B cell (primary cell): ENCODE measurements at regions of chr19 and their contacts with region 1.

Region 1: GRCh38 chr19:10332955-10333757 is at the start of gene RAVER1:
- DNase-seq: peak; percentile 99
- ATAC-seq: peak; percentile 97
- H3K4me3 ChIP-seq: peak within 1 kb of the TSS; percentile 63 to 94 (median 83)
- H3K4me3 Mint-ChIP-seq: peak within 1 kb of the TSS; percentile 97
- H3K27ac ChIP-seq: peak within 1 kb of the TSS; percentile 90 to 91
- H3K27ac Mint-ChIP-seq: peak within 1 kb of the TSS; percentile 97
- H3K4me1 ChIP-seq: peaks cover 14 to 24% of the 10 kb centered on the region in 2 donors
- H3K4me1 Mint-ChIP-seq: peaks cover 21% of the 10 kb centered on the region
- H3K27me3 ChIP-seq: no peaks in the 10 kb centered on the region
- H3K27me3 Mint-ChIP-seq: no peaks in the 10 kb centered on the region
- CTCF ChIP-seq: no peak
- total RNA-seq, gene RAVER1: 54.6 and 62.7 TPM in 2 replicates

Region 2: GRCh38 chr19:10230861-10231611 is 102.1 kb before region 1 on chr19 and contains the start of gene S1PR2:
- CTCF ChIA-PET with region 1: interaction called, 3 read pairs
- POLR2A ChIA-PET with region 1: interaction called, 13 read pairs
- intact Hi-C with region 1: no loop called
- DNase-seq: peak; percentile 93
- ATAC-seq: peak; percentile 29
- H3K4me3 ChIP-seq: peak within 1 kb of the TSS; percentile 11 to 97 (median 66)
- H3K4me3 Mint-ChIP-seq: peak within 1 kb of the TSS; percentile 83
- H3K27ac ChIP-seq: peak within 1 kb of the TSS in 1 of 2 donors; percentile 81
- H3K27ac Mint-ChIP-seq: peak within 1 kb of the TSS; percentile 73
- H3K4me1 ChIP-seq: peaks cover 28 to 57% of the 10 kb centered on the region in 2 donors
- H3K4me1 Mint-ChIP-seq: peaks cover 45% of the 10 kb centered on the region
- H3K27me3 ChIP-seq: no peaks in the 10 kb centered on the region
- H3K27me3 Mint-ChIP-seq: no peaks in the 10 kb centered on the region
- CTCF ChIP-seq: no peak
- total RNA-seq, gene S1PR2: 3.6 and 4.4 TPM in 2 replicates

Region 3: GRCh38 chr19:10315335-10316214 is 17.6 kb before region 1 on chr19 and contains the start of gene FDX2:
- CTCF ChIA-PET with region 1: no interaction called
- POLR2A ChIA-PET with region 1: interaction called, 8 read pairs
- intact Hi-C with region 1: loop called (anchors 1 kb)
- DNase-seq: peak; percentile 92
- ATAC-seq: peak; percentile 91
- H3K4me3 ChIP-seq: peak within 1 kb of the TSS; percentile 31 to 91 (median 80)
- H3K4me3 Mint-ChIP-seq: peak within 1 kb of the TSS; percentile 96
- H3K27ac ChIP-seq: peak within 1 kb of the TSS in 1 of 2 donors; percentile 55
- H3K27ac Mint-ChIP-seq: peak within 1 kb of the TSS; percentile 85
- H3K4me1 ChIP-seq: peaks cover 6 to 14% of the 10 kb centered on the region in 2 donors
- H3K4me1 Mint-ChIP-seq: peaks cover 14% of the 10 kb centered on the region
- H3K27me3 ChIP-seq: no peaks in the 10 kb centered on the region
- H3K27me3 Mint-ChIP-seq: no peaks in the 10 kb centered on the region
- CTCF ChIP-seq: no peak
- total RNA-seq, gene FDX2: 13.6 and 13.9 TPM in 2 replicates

Region 4: DNA sequence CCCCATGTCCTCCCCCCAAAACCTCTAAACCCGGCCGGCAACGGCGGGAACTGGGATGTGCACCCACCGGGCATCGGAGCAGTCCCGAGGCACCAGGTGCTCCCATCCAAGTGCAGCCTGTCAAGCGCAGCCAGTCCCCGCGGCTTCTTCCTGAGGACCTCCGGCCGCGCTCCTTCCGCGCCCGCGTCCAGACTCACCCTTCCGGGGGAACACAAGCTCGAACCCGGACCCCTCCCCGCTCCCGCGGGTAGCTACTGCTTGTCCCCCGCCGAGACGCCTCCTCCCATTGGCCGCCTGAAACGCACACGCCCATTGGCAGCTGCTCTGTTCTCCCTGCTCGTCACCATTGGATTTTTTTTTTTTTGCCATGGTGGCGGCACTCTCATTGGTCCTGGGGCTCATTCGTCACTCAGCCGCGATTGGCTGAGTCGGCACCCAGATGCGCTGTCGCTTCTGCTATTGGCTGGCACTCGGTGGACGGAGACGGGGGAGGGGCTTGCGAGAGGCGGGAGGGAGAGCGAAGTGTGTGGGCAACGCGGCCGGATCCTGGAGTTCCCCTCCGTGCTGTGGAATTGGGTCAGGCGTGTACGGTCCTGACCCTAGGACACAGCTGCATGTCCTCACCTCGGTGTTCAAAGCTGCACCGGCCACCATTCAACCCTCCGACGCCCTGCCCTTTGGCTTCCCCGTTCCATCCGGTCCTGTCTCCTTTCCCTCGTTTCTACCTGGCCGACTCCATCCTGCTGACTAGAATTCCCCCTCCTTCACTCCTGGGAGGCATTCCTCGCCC is 47.4 kb after region 1 on chr19 and contains the start of gene TYK2:
- CTCF ChIA-PET with region 1: interaction called, 3 read pairs
- POLR2A ChIA-PET with region 1: interaction called, 9 read pairs
- intact Hi-C with region 1: loop called (anchors 1 kb)
- DNase-seq: peak; percentile 99
- ATAC-seq: peak; percentile 91
- H3K4me3 ChIP-seq: peak within 1 kb of the TSS; percentile 63 to 99 (median 90)
- H3K4me3 Mint-ChIP-seq: peak within 1 kb of the TSS; percentile 87
- H3K27ac ChIP-seq: peak within 1 kb of the TSS; percentile 78 to 91
- H3K27ac Mint-ChIP-seq: peak within 1 kb of the TSS; percentile 91
- H3K4me1 ChIP-seq: peaks cover 10 to 17% of the 10 kb centered on the region in 2 donors
- H3K4me1 Mint-ChIP-seq: peaks cover 21% of the 10 kb centered on the region
- H3K27me3 ChIP-seq: no peaks in the 10 kb centered on the region
- H3K27me3 Mint-ChIP-seq: no peaks in the 10 kb centered on the region
- CTCF ChIP-seq: no peak
- total RNA-seq, gene TYK2: 337 and 347 TPM in 2 replicates

Region 5: GRCh38 chr19:10551698-10552301 is 218.6 kb after region 1 on chr19:
- CTCF ChIA-PET with region 1: no interaction called
- POLR2A ChIA-PET with region 1: no interaction called
- intact Hi-C with region 1: no loop called
- DNase-seq: no peak
- ATAC-seq: no peak
- H3K4me3 ChIP-seq: no peak overlapping the region
- H3K4me3 Mint-ChIP-seq: no peak overlapping the region
- H3K27ac ChIP-seq: peak overlapping the region in 1 of 2 donors; percentile 81
- H3K27ac Mint-ChIP-seq: peak overlapping the region; percentile 78
- H3K4me1 ChIP-seq: peaks cover 37 to 44% of the 10 kb centered on the region in 2 donors
- H3K4me1 Mint-ChIP-seq: peaks cover 34% of the 10 kb centered on the region
- H3K27me3 ChIP-seq: no peaks in the 10 kb centered on the region
- H3K27me3 Mint-ChIP-seq: no peaks in the 10 kb centered on the region
- CTCF ChIP-seq: no peak

Region 6: GRCh38 chr19:10828981-10829821 is 496.0 kb after region 1 on chr19:
- CTCF ChIA-PET with region 1: no interaction called
- POLR2A ChIA-PET with region 1: no interaction called
- intact Hi-C with region 1: no loop called
- DNase-seq: peak; percentile 28
- ATAC-seq: no peak
- H3K4me3 ChIP-seq: no peak overlapping the region
- H3K4me3 Mint-ChIP-seq: no peak overlapping the region
- H3K27ac ChIP-seq: no peak overlapping the region
- H3K27ac Mint-ChIP-seq: no peak overlapping the region
- H3K4me1 ChIP-seq: no peaks in the 10 kb centered on the region
- H3K4me1 Mint-ChIP-seq: no peaks in the 10 kb centered on the region
- H3K27me3 ChIP-seq: no peaks in the 10 kb centered on the region
- H3K27me3 Mint-ChIP-seq: no peaks in the 10 kb centered on the region
- CTCF ChIP-seq: peak; percentile 7

Region 7: GRCh38 chr19:11694533-11695439 is 1361.6 kb after region 1 on chr19:
- CTCF ChIA-PET with region 1: no interaction called
- POLR2A ChIA-PET with region 1: no interaction called
- intact Hi-C with region 1: no loop called
- DNase-seq: peak; percentile 87
- ATAC-seq: peak; percentile 97
- H3K4me3 ChIP-seq: peak overlapping the region in 4 of 5 experiments; percentile 60 to 69 (median 66)
- H3K4me3 Mint-ChIP-seq: peak overlapping the region; percentile 94
- H3K27ac ChIP-seq: no peak overlapping the region
- H3K27ac Mint-ChIP-seq: peak overlapping the region; percentile 5
- H3K4me1 ChIP-seq: peaks cover 11 to 16% of the 10 kb centered on the region in 2 donors
- H3K4me1 Mint-ChIP-seq: peaks cover 12% of the 10 kb centered on the region
- H3K27me3 ChIP-seq: peaks cover 0 to 26% (median 10%) of the 10 kb centered on the region in 4 experiments
- H3K27me3 Mint-ChIP-seq: peaks cover 38% of the 10 kb centered on the region
- CTCF ChIP-seq: no peak